ENCODE measurements at regions of chrX and their contacts with region 1.

Region 1: GRCh38 chrX:11533211-11533651 is 132.5 kb downstream of the ARHGAP6 start:
- DNase-seq: peak; percentile 54
- H3K4me3 Mint-ChIP-seq: no peak overlapping the region
- H3K27ac Mint-ChIP-seq: no peak overlapping the region
- H3K4me1 Mint-ChIP-seq: no peaks in the 10 kb centered on the region
- H3K27me3 Mint-ChIP-seq: peaks cover 6% of the 10 kb centered on the region

Region 2: DNA sequence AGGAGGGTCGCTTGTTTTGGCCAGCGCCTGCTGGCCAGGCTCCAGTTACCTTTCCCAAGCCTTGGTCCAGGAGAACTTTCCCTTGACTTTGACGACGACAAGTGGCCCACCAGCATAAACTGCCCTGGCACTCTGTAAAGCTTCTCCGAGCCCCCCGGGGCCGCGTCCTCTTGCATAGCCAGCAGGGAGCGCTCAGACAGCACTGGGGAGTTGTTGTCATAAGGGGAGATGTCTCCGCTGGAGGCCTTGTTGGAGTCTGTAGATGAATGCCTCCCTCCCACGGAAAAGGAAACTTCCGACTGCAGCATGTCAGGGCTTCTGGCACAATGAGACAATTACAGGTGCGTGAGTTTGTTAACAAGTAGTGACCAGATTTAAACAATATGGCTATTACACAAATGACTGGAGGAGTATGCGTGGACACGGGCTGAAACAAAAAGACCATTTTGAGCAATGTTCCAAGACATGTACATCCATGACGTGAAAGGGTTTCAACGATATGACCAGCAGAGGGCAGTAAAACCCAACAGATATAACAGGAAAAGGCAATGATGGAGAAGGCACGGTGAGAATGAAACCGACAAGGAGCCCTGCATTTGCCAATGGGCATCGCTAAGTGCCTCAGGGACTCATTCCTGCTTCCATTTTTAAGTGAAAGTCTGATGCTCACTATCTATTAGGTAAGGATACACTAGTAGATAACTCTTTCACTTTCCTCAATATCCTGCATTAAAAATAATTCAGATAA is 389.1 kb before region 1 on chrX:
- intact Hi-C with region 1: loop called (anchors 2 kb)
- DNase-seq: peak; percentile 85
- H3K4me3 Mint-ChIP-seq: no peak overlapping the region
- H3K27ac Mint-ChIP-seq: no peak overlapping the region
- H3K4me1 Mint-ChIP-seq: peaks cover 2% of the 10 kb centered on the region
- H3K27me3 Mint-ChIP-seq: no peaks in the 10 kb centered on the region

Region 3: DNA sequence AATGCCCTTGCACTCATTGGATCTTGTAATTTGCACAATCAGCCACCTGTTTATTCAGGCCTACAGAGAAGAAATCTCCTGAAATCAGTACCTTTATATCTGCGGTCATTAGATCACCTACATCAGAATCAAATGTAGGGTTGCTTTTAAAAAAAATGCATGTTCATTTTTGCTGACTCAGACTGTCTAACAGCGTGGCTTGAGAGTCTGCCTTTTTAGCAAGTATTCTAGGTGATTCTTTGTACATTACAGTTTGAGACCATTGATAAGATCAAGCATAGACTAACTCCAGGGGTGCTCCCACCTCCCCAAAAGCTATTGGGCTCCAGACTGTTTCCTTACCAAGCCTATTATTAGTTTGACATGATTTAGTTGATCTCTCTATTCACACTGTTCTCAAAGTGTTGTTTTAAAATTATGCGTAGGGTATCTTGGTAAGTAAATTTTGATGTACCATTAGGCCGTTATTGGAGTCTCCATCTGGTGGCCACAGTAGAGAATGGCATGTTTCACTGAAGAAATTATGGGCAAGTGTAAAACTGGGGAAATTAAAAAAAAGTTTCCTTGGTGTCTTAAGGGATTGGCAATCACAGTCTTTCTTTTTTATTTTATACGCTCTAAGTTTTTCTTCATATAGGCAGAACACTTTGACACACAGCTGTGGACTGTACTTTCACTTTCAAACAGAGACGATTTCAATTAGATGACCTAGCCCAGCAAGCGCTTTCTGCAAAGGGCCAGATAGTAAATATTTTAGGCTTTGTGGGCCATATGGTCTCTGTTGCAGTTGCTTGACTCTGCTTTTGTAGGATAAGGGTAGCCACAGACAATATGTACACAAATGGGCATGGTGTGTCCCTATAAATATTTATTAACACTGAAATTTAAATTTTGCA is 191.1 kb after region 1 on chrX:
- intact Hi-C with region 1: loop called (anchors 1 kb)
- DNase-seq: peak; percentile 56
- H3K4me3 Mint-ChIP-seq: no peak overlapping the region
- H3K27ac Mint-ChIP-seq: no peak overlapping the region
- H3K4me1 Mint-ChIP-seq: no peaks in the 10 kb centered on the region
- H3K27me3 Mint-ChIP-seq: no peaks in the 10 kb centered on the region

Region 4: GRCh38 chrX:11770320-11770719 is 237.1 kb after region 1 on chrX:
- intact Hi-C with region 1: loop called (anchors 1 kb)
- DNase-seq: peak; percentile 82
- H3K4me3 Mint-ChIP-seq: peak overlapping the region; percentile 52
- H3K27ac Mint-ChIP-seq: peak overlapping the region; percentile 84
- H3K4me1 Mint-ChIP-seq: peaks cover 23% of the 10 kb centered on the region
- H3K27me3 Mint-ChIP-seq: no peaks in the 10 kb centered on the region

Region 5: GRCh38 chrX:11908371-11908770 is 375.1 kb after region 1 on chrX:
- intact Hi-C with region 1: loop called (anchors 1 kb)
- DNase-seq: peak; percentile 67
- H3K4me3 Mint-ChIP-seq: no peak overlapping the region
- H3K27ac Mint-ChIP-seq: no peak overlapping the region
- H3K4me1 Mint-ChIP-seq: peaks cover 3% of the 10 kb centered on the region
- H3K27me3 Mint-ChIP-seq: no peaks in the 10 kb centered on the region

Region 6: GRCh38 chrX:12771445-12772069 is 1238.3 kb after region 1 on chrX:
- intact Hi-C with region 1: loop called (anchors 5 kb)
- DNase-seq: peak; percentile 91
- H3K4me3 Mint-ChIP-seq: peak overlapping the region; percentile 55
- H3K27ac Mint-ChIP-seq: no peak overlapping the region
- H3K4me1 Mint-ChIP-seq: peaks cover 7% of the 10 kb centered on the region
- H3K27me3 Mint-ChIP-seq: peaks cover 35% of the 10 kb centered on the region